PC-9 (cell line): ENCODE measurements at regions of chr17 and their contacts with region 1.

Region 1: GRCh38 chr17:72456026-72456569 is 335.3 kb downstream of the SOX9 start:
- DNase-seq: peak; percentile 86 to 98
- H3K4me3 ChIP-seq: no peak overlapping the region
- H3K27ac ChIP-seq: peak overlapping the region; percentile 88
- H3K4me1 ChIP-seq: peaks cover 77% of the 10 kb centered on the region
- H3K27me3 ChIP-seq: no peaks in the 10 kb centered on the region
- CTCF ChIP-seq: no peak

Region 2: DNA sequence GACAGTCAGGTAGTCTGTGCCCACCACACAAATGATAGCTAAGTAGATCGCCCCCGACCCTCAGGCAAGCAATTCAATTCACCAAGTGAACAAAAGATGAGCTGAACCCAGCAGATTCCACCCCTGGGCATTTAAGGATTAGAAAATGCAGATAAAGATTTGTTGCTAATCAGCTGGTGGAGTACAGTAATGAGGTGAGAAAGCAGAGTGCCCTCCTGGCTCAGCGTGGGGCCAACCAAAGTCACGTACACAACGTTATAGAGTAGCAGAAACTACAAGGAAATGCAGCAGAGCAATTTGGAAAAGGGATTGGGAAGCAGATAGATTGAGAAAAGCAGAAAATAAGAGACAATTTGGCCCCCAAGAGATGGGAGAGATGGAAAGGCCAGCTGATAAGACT is 244.1 kb before region 1 on chr17:
- CTCF ChIA-PET with region 1: no interaction called
- POLR2A ChIA-PET with region 1: interaction called, 28 read pairs
- intact Hi-C with region 1: no loop called
- DNase-seq: no peak
- H3K4me3 ChIP-seq: no peak overlapping the region
- H3K27ac ChIP-seq: no peak overlapping the region
- H3K4me1 ChIP-seq: no peaks in the 10 kb centered on the region
- H3K27me3 ChIP-seq: no peaks in the 10 kb centered on the region
- CTCF ChIP-seq: no peak

Region 3: GRCh38 chr17:72362376-72363088 is 93.6 kb before region 1 on chr17:
- CTCF ChIA-PET with region 1: interaction called, 3 read pairs
- POLR2A ChIA-PET with region 1: interaction called, 21 read pairs
- intact Hi-C with region 1: no loop called
- DNase-seq: peak in 1 of 2 experiments; percentile 79
- H3K4me3 ChIP-seq: no peak overlapping the region
- H3K27ac ChIP-seq: peak overlapping the region; percentile 41
- H3K4me1 ChIP-seq: peaks cover 44% of the 10 kb centered on the region
- H3K27me3 ChIP-seq: no peaks in the 10 kb centered on the region
- CTCF ChIP-seq: no peak

Region 4: GRCh38 chr17:72472106-72472505 is 16.0 kb after region 1 on chr17:
- CTCF ChIA-PET with region 1: interaction called, 6 read pairs
- POLR2A ChIA-PET with region 1: interaction called, 15 read pairs
- intact Hi-C with region 1: no loop called
- DNase-seq: no peak
- H3K4me3 ChIP-seq: no peak overlapping the region
- H3K27ac ChIP-seq: no peak overlapping the region
- H3K4me1 ChIP-seq: peaks cover 48% of the 10 kb centered on the region
- H3K27me3 ChIP-seq: no peaks in the 10 kb centered on the region
- CTCF ChIP-seq: no peak